Posterior vena cava (tissue), 2 donors: ENCODE measurements at regions of chr3 and their contacts with region 1.

Region 1: GRCh38 chr3:95228416-95228815 is 1165.6 kb downstream of the NSUN3 start:
- DNase-seq: no peak

Region 2: GRCh38 chr3:94709249-94709902 is 519.0 kb before region 1 on chr3:
- intact Hi-C with region 1: no loop called
- DNase-seq: no peak

Region 3: GRCh38 chr3:95911767-95912166 is 683.4 kb after region 1 on chr3:
- intact Hi-C with region 1: loop called in 1 of 2 experiments (anchors 5 kb)
- DNase-seq: peak; percentile 48